Activated T-helper 1 cell treated with anti-CD3 and anti-CD28 coated beads, Interleukin-12 subunit alpha, Interleukin-12 subunit beta, Interleukin-2, Interleukin-4 antibody, amounts not matched to agents 30 ng/mL and 10 ng/mL and 1 ng/mL, durations not matched to agents 14 hours and 24 hours and 36 hours (primary cell): ENCODE measurements at regions of chr2 and their contacts with region 1.

Region 1: DNA sequence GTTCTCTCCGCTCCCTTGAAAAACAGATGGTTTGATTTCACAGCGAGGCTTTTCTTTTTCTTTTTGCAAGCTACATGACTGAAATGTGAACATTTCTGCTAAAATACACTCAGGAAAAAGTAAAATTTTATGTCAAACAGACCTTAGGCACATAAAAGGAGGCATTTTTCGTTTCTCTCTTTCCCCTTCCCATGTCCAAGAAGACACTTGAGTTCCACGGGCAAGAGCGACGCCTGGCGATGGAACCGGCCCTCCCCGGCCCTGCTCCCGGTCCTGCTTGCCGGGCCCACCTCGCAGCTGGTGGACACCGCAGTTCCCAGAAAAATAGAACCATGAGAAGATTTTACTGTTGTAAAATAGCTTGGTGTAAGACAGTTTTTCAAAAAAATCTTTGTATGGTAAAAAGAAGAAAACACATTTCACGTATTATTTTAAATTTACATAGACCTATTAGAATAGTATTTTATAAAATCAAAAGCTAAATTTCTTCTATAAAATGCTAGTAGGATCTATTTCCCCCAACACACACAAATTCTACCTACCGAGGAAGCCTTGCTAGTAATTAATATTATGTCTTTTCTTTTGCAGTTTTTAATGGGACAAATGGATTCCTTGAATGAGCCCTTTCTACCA is 2.3 kb upstream of the ALKAL2 start:
- DNase-seq: peak; percentile 16
- H3K4me3 Mint-ChIP-seq: peak overlapping the region; percentile 37
- H3K27ac Mint-ChIP-seq: no peak overlapping the region
- H3K4me1 Mint-ChIP-seq: no peaks in the 10 kb centered on the region
- H3K27me3 Mint-ChIP-seq: peaks cover 40% of the 10 kb centered on the region

Region 2: GRCh38 chr2:231521-232185 is 58.6 kb before region 1 on chr2:
- intact Hi-C with region 1: loop called (anchors 5 kb)
- DNase-seq: no peak
- H3K4me3 Mint-ChIP-seq: no peak overlapping the region
- H3K27ac Mint-ChIP-seq: no peak overlapping the region
- H3K4me1 Mint-ChIP-seq: no peaks in the 10 kb centered on the region
- H3K27me3 Mint-ChIP-seq: no peaks in the 10 kb centered on the region

Region 3: DNA sequence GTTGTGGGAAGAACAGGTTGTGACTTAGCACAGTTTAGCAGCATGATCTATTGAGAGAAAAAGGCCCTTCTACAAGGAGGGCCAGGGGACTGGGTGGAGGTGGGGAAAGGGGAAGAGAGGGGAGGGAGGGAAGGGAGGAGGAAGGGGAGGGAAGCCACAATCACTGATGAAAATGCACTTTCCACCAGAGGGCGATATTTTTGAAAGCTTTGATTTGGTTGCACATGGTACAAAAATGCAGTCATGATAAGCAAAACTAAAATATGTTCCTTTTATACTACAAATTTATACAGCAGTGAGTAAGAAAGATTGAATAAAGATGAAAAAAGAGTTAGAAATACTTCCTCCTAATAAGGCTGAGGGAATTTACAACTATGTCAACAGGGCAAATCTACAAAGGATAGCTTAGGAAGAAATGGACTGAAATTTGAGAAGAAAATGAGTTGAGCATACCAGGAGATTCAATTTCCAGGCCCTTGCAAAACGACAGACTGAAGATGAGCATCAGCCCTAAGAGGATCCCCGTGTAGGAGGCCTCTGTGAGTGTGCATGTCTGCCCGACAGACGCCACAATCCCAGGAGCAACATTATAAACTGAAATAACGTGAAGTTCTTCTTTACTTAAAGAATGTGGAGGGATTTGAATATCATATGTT is 43.6 kb before region 1 on chr2:
- intact Hi-C with region 1: loop called (anchors 2 kb)
- DNase-seq: no peak
- H3K4me3 Mint-ChIP-seq: no peak overlapping the region
- H3K27ac Mint-ChIP-seq: no peak overlapping the region
- H3K4me1 Mint-ChIP-seq: no peaks in the 10 kb centered on the region
- H3K27me3 Mint-ChIP-seq: no peaks in the 10 kb centered on the region